ENCODE measurements at regions of chr3 and their contacts with region 1.

Region 1: GRCh38 chr3:120095226-120095978 is 1.2 kb upstream of the GSK3B start:
- DNase-seq: peak; percentile 88 to 90
- ATAC-seq: peak; percentile 24 to 50 (median 32)
- H3K4me3 ChIP-seq: peak overlapping the region; percentile 57
- H3K4me3 Mint-ChIP-seq: no peak overlapping the region
- H3K27ac ChIP-seq: peak overlapping the region; percentile 86
- H3K27ac Mint-ChIP-seq: no peak overlapping the region
- H3K4me1 ChIP-seq: peaks cover 6% of the 10 kb centered on the region
- H3K4me1 Mint-ChIP-seq: peaks cover 23 to 25% of the 10 kb centered on the region in 2 donors
- H3K27me3 ChIP-seq: no peaks in the 10 kb centered on the region
- H3K27me3 Mint-ChIP-seq: no peaks in the 10 kb centered on the region
- CTCF ChIP-seq: no peak

Region 2: GRCh38 chr3:119240591-119241434 is 854.6 kb before region 1 on chr3 and contains the start of gene B4GALT4:
- intact Hi-C with region 1: loop called (anchors 2 kb)
- DNase-seq: peak; percentile 79 to 80
- ATAC-seq: peak; percentile 78 to 91 (median 84)
- H3K4me3 ChIP-seq: peak within 1 kb of the TSS; percentile 49
- H3K4me3 Mint-ChIP-seq: peak within 1 kb of the TSS; percentile 96
- H3K27ac ChIP-seq: peak within 1 kb of the TSS; percentile 79
- H3K27ac Mint-ChIP-seq: peak within 1 kb of the TSS; percentile 92 to 96
- H3K4me1 ChIP-seq: peaks cover 37% of the 10 kb centered on the region
- H3K4me1 Mint-ChIP-seq: peaks cover 29 to 37% of the 10 kb centered on the region in 2 donors
- H3K27me3 ChIP-seq: no peaks in the 10 kb centered on the region
- H3K27me3 Mint-ChIP-seq: no peaks in the 10 kb centered on the region
- CTCF ChIP-seq: no peak
- total RNA-seq, gene B4GALT4: 35.1 to 54.1 (median 48.8) TPM

Region 3: GRCh38 chr3:119322835-119323722 is 772.3 kb before region 1 on chr3:
- intact Hi-C with region 1: loop called (anchors 2 kb)
- DNase-seq: peak; percentile 90 to 95
- ATAC-seq: peak; percentile 85 to 94 (median 89)
- H3K4me3 ChIP-seq: peak overlapping the region; percentile 83
- H3K4me3 Mint-ChIP-seq: peak overlapping the region; percentile 98
- H3K27ac ChIP-seq: peak overlapping the region; percentile 92
- H3K27ac Mint-ChIP-seq: peak overlapping the region; percentile 97 to 98
- H3K4me1 ChIP-seq: peaks cover 15% of the 10 kb centered on the region
- H3K4me1 Mint-ChIP-seq: peaks cover 12 to 31% of the 10 kb centered on the region in 2 donors
- H3K27me3 ChIP-seq: no peaks in the 10 kb centered on the region
- H3K27me3 Mint-ChIP-seq: no peaks in the 10 kb centered on the region
- CTCF ChIP-seq: no peak

Region 4: GRCh38 chr3:119676771-119677640 is 418.4 kb before region 1 on chr3 and contains the start of gene COX17:
- intact Hi-C with region 1: loop called (anchors 10 kb)
- DNase-seq: peak; percentile 91 to 99
- ATAC-seq: peak; percentile 86 to 92 (median 89)
- H3K4me3 ChIP-seq: peak within 1 kb of the TSS; percentile 60
- H3K4me3 Mint-ChIP-seq: peak within 1 kb of the TSS; percentile 95
- H3K27ac ChIP-seq: peak within 1 kb of the TSS; percentile 93
- H3K27ac Mint-ChIP-seq: peak within 1 kb of the TSS; percentile 97 to 99
- H3K4me1 ChIP-seq: no peaks in the 10 kb centered on the region
- H3K4me1 Mint-ChIP-seq: peaks cover 30 to 31% of the 10 kb centered on the region in 2 donors
- H3K27me3 ChIP-seq: no peaks in the 10 kb centered on the region
- H3K27me3 Mint-ChIP-seq: no peaks in the 10 kb centered on the region
- CTCF ChIP-seq: no peak
- total RNA-seq, gene COX17: 35.6 to 44.8 (median 40.6) TPM

Region 5: GRCh38 chr3:120052225-120052624 is 43.2 kb before region 1 on chr3:
- intact Hi-C with region 1: loop called (anchors 5 kb)
- DNase-seq: peak in 1 of 2 donors; percentile 18
- ATAC-seq: peak in 2 of 3 donors; percentile 27 to 52
- H3K4me3 ChIP-seq: no peak overlapping the region
- H3K4me3 Mint-ChIP-seq: peak overlapping the region; percentile 47
- H3K27ac ChIP-seq: peak overlapping the region; percentile 19
- H3K27ac Mint-ChIP-seq: peak overlapping the region; percentile 58 to 67
- H3K4me1 ChIP-seq: peaks cover 21% of the 10 kb centered on the region
- H3K4me1 Mint-ChIP-seq: peaks cover 76 to 79% of the 10 kb centered on the region in 2 donors
- H3K27me3 ChIP-seq: no peaks in the 10 kb centered on the region
- H3K27me3 Mint-ChIP-seq: no peaks in the 10 kb centered on the region
- CTCF ChIP-seq: no peak

Region 6: GRCh38 chr3:120558771-120559241 is 463.4 kb after region 1 on chr3:
- intact Hi-C with region 1: loop called (anchors 10 kb)
- DNase-seq: peak; percentile 89 to 94
- ATAC-seq: peak; percentile 92 to 96 (median 95)
- H3K4me3 ChIP-seq: peak overlapping the region; percentile 17
- H3K4me3 Mint-ChIP-seq: peak overlapping the region; percentile 77
- H3K27ac ChIP-seq: no peak overlapping the region
- H3K27ac Mint-ChIP-seq: peak overlapping the region in 1 of 2 donors; percentile 49
- H3K4me1 ChIP-seq: peaks cover 10% of the 10 kb centered on the region
- H3K4me1 Mint-ChIP-seq: peaks cover 12 to 21% of the 10 kb centered on the region in 2 donors
- H3K27me3 ChIP-seq: no peaks in the 10 kb centered on the region
- H3K27me3 Mint-ChIP-seq: peaks cover 10% of the 10 kb centered on the region in 2 donors
- CTCF ChIP-seq: peak; percentile 96

Region 7: DNA sequence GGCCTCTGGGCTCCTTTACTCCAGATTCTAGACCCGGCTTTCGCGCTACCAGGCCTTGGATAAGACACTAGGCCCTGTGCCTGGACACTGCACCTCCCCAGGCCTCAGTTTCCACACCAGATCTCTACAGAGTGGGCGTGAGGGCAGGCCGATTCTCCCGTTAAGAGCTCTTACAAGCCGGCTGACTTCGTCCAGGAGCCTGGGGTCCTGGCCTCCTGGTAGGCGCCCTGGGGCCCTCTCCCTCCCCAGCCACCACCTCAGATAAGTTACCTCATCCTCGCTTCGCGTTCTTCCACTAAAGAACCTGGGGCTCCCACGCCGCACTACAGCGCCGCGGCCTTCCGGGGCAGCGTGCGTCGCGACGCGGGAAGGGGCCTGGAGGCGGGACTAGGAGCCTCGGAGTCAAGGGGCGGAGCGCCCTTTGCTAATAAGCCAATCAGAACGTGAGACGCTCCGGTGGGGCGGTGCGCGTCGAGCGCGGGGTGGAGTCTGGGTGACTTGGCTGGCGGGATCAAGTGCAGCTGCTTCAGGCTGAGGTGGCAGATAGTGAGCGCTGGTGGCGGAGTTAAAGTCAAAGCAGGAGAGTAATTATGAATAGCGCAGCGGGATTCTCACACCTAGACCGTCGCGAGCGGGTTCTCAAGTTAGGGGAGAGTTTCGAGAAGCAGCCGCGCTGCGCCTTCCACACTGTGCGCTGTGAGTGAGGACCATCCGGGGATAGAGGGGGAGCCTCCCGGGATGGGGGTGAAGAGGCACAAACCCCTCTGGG is 1739.5 kb after region 1 on chr3 and contains the starts of genes EAF2 and IQCB1:
- intact Hi-C with region 1: loop called (anchors 10 kb)
- DNase-seq: peak; percentile 95 to 99
- ATAC-seq: peak; percentile 97 to 100 (median 98)
- H3K4me3 ChIP-seq: peak within 1 kb of the TSS; percentile 83
- H3K4me3 Mint-ChIP-seq: peak within 1 kb of the TSS; percentile 98
- H3K27ac ChIP-seq: peak within 1 kb of the TSS; percentile 91
- H3K27ac Mint-ChIP-seq: peak within 1 kb of the TSS; percentile 92 to 97
- H3K4me1 ChIP-seq: peaks cover 14% of the 10 kb centered on the region
- H3K4me1 Mint-ChIP-seq: peaks cover 48 to 50% of the 10 kb centered on the region in 2 donors
- H3K27me3 ChIP-seq: no peaks in the 10 kb centered on the region
- H3K27me3 Mint-ChIP-seq: peaks cover 0 to 9% of the 10 kb centered on the region in 2 donors
- CTCF ChIP-seq: no peak
- total RNA-seq, gene EAF2: 5.1 to 7.4 (median 5.4) TPM
- total RNA-seq, gene IQCB1: 42.6 to 44.3 (median 42.6) TPM

Measured in natural killer cell (primary cell).